Activated B cell treated with CpG ODN at 0.5 μM for 24 hours (primary cell): ENCODE measurements at regions of chr19 and their contacts with region 1.

Region 1: DNA sequence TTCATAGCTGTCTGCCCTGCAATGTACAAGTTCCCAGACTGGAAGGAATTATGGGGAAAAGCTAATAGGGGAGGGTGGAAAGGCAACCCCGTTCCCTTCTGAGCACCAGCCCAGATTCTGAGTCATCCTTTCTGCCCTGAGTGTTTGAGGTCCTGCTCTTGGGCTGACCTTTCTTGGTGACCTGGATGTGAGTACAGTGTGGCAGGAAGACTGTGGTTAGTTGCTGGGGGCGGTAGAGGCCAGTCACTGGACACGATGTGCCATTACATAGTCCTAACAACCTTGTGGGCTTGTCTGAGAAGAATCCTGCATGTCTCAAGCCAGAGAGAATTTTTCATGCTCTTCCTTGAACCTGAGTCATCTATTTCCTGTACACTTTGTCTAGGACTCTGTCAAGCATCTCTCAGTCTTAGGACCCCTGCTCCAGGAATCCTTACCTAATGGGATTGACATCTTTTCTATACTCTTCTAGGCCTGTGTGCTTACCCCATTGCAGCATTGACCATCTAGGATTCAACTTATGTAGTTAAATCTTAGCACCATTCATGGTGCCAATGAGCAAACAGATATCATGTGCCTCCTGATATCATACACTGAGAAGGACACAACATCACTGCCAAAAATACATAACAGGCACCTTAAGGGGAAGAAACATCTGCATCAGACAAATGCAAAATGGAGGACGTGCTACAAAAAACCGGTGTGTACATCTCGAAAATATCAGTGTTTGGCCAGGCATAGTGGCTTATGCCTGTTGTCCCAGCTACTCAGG is 8.1 kb upstream of the ANGPTL4 start:
- DNase-seq: no peak
- ATAC-seq: no peak
- H3K4me3 Mint-ChIP-seq: no peak overlapping the region
- H3K27ac Mint-ChIP-seq: no peak overlapping the region
- H3K4me1 Mint-ChIP-seq: peaks cover 3% of the 10 kb centered on the region
- H3K27me3 Mint-ChIP-seq: peaks cover 14% of the 10 kb centered on the region
- CTCF ChIP-seq: no peak

Region 2: GRCh38 chr19:8396563-8397203 is 40.9 kb after region 1 on chr19:
- CTCF ChIA-PET with region 1: no interaction called
- POLR2A ChIA-PET with region 1: interaction called, 3 read pairs
- intact Hi-C with region 1: loop called (anchors 1 kb)
- DNase-seq: peak; percentile 46
- ATAC-seq: peak; percentile 96
- H3K4me3 Mint-ChIP-seq: no peak overlapping the region
- H3K27ac Mint-ChIP-seq: peak overlapping the region; percentile 50
- H3K4me1 Mint-ChIP-seq: peaks cover 27% of the 10 kb centered on the region
- H3K27me3 Mint-ChIP-seq: no peaks in the 10 kb centered on the region
- CTCF ChIP-seq: no peak

Region 3: GRCh38 chr19:8468761-8469373 is 113.0 kb after region 1 on chr19:
- CTCF ChIA-PET with region 1: no interaction called
- POLR2A ChIA-PET with region 1: no interaction called
- intact Hi-C with region 1: no loop called
- DNase-seq: no peak
- ATAC-seq: no peak
- H3K4me3 Mint-ChIP-seq: no peak overlapping the region
- H3K27ac Mint-ChIP-seq: no peak overlapping the region
- H3K4me1 Mint-ChIP-seq: peaks cover 20% of the 10 kb centered on the region
- H3K27me3 Mint-ChIP-seq: no peaks in the 10 kb centered on the region
- CTCF ChIP-seq: no peak

Region 4: GRCh38 chr19:8505680-8506401 is 150.0 kb after region 1 on chr19:
- CTCF ChIA-PET with region 1: interaction called, 15 read pairs
- POLR2A ChIA-PET with region 1: no interaction called
- intact Hi-C with region 1: loop called (anchors 1 kb)
- DNase-seq: peak; percentile 78
- ATAC-seq: peak; percentile 72
- H3K4me3 Mint-ChIP-seq: peak overlapping the region; percentile 91
- H3K27ac Mint-ChIP-seq: no peak overlapping the region
- H3K4me1 Mint-ChIP-seq: peaks cover 11% of the 10 kb centered on the region
- H3K27me3 Mint-ChIP-seq: peaks cover 2% of the 10 kb centered on the region
- CTCF ChIP-seq: no peak

Region 5: DNA sequence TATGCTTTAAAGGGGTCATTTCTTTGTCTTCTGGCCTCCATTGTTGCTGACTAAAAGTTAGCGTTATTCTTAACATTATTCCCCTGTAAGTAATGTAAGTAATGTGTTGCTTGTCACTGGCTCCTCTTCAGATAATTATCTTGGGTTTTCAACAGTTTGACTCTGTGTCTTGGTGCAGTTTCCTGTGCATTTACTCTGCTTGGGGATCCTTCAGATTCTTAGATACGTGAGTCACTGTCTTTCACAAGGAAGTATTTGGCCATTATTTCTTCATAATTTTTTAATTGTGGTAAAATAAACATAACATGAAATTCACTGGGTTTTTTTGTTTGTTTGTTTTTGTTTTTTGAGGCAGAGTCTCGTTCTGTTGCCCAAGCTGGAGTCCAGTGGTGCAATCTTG is 809.4 kb after region 1 on chr19:
- CTCF ChIA-PET with region 1: no interaction called
- POLR2A ChIA-PET with region 1: no interaction called
- intact Hi-C with region 1: no loop called
- DNase-seq: no peak
- ATAC-seq: no peak
- H3K4me3 Mint-ChIP-seq: no peak overlapping the region
- H3K27ac Mint-ChIP-seq: no peak overlapping the region
- H3K4me1 Mint-ChIP-seq: no peaks in the 10 kb centered on the region
- H3K27me3 Mint-ChIP-seq: no peaks in the 10 kb centered on the region
- CTCF ChIP-seq: no peak